ENCODE measurements at regions of chr2 and their contacts with region 1.

Region 1: DNA sequence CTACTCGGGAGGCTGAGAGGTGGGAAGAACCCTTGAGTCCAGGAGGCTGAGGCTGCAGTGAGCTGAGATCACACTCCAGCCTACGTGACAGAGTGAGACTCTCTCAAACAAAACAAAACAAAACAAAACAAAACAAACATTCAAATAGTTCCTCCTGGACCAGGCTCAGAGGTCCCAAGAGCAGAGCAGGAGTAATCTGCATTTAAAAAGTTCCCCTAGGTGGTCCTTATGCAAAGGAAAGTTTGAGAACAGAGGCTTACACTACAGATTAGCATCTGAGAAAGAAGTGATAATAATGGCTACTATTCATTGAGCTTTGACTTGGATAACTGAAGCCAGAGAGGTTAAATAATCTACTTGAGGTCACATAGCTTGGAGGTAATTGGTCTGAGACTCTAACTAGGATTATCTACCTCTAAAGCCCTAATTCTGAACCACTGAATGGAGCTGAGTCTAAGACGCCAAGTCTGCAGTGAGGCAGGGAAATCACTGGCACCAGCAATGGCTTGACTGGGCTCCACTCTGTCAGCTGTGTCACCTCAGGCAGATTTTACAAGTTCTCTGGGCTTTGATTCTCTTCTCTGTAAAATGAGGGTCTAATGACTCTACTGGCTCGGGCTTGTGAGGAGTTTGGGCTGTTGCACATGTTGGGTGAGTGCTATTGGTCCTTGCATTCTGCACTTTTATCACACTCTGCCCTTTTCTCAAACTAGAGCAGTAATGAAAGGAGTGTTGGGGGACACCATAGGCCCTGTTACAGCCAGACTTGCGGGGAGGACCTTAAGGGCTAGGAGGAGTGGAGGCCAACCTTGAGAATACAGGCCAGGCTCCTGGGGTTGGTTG is 29.2 kb upstream of the DLX2 start:
- DNase-seq: no peak
- H3K4me3 Mint-ChIP-seq: no peak overlapping the region
- H3K27ac Mint-ChIP-seq: no peak overlapping the region
- H3K4me1 Mint-ChIP-seq: no peaks in the 10 kb centered on the region
- H3K27me3 Mint-ChIP-seq: peaks cover 17% of the 10 kb centered on the region

Region 2: GRCh38 chr2:171598713-171599319 is 533.1 kb before region 1 on chr2:
- intact Hi-C with region 1: loop called (anchors 1 kb)
- DNase-seq: peak; percentile 83
- H3K4me3 Mint-ChIP-seq: no peak overlapping the region
- H3K27ac Mint-ChIP-seq: no peak overlapping the region
- H3K4me1 Mint-ChIP-seq: peaks cover 2% of the 10 kb centered on the region
- H3K27me3 Mint-ChIP-seq: peaks cover 14% of the 10 kb centered on the region